ENCODE measurements at regions of chr20 and their contacts with region 1.

Region 1: DNA sequence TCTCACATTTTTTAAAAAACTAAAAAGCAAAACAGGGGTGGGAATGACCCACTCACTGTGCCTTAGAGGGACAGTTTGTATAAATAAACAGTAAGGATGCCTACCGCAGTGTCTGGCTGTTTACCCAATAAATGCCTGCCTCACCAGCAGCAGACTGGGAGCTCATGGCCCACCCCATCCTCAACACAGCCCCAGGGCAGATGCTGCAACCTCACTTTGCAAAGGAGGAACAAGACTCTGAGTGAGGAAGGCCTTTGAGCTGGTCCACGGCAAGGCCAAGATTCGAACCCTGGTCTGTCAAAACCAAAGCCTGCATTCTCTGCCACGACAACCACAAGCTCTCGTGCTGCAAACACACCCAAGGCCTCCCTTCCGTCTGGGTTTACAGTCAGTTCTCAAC is 77.8 kb downstream of the BMP7 start:
- DNase-seq: no peak
- H3K4me3 ChIP-seq: no peak overlapping the region
- H3K27ac ChIP-seq: no peak overlapping the region
- H3K4me1 ChIP-seq: no peaks in the 10 kb centered on the region
- H3K27me3 ChIP-seq: no peaks in the 10 kb centered on the region
- CTCF ChIP-seq: no peak

Region 2: GRCh38 chr20:57142667-57143066 is 45.9 kb before region 1 on chr20:
- CTCF ChIA-PET with region 1: no interaction called
- POLR2A ChIA-PET with region 1: no interaction called
- intact Hi-C with region 1: no loop called
- DNase-seq: no peak
- H3K4me3 ChIP-seq: no peak overlapping the region
- H3K27ac ChIP-seq: no peak overlapping the region
- H3K4me1 ChIP-seq: no peaks in the 10 kb centered on the region
- H3K27me3 ChIP-seq: peaks cover 17% of the 10 kb centered on the region
- CTCF ChIP-seq: no peak

Region 3: GRCh38 chr20:57202274-57202870 is 13.8 kb after region 1 on chr20:
- CTCF ChIA-PET with region 1: no interaction called
- POLR2A ChIA-PET with region 1: interaction called, 12 read pairs
- intact Hi-C with region 1: no loop called
- DNase-seq: no peak
- H3K4me3 ChIP-seq: no peak overlapping the region
- H3K27ac ChIP-seq: no peak overlapping the region
- H3K4me1 ChIP-seq: no peaks in the 10 kb centered on the region
- H3K27me3 ChIP-seq: no peaks in the 10 kb centered on the region
- CTCF ChIP-seq: no peak

Measured in A673 (cell line).